ENCODE measurements at regions of chr9 and their contacts with region 1.

Region 1: GRCh38 chr9:95875305-95876137 is at the start of gene ERCC6L2:
- DNase-seq: peak; percentile 90 to 92 (median 90)
- H3K4me3 ChIP-seq: no peak within 1 kb of the TSS
- H3K4me3 Mint-ChIP-seq: no peak within 1 kb of the TSS
- H3K27ac ChIP-seq: no peak within 1 kb of the TSS
- H3K27ac Mint-ChIP-seq: no peak within 1 kb of the TSS
- H3K4me1 ChIP-seq: peaks cover 28% of the 10 kb centered on the region
- H3K4me1 Mint-ChIP-seq: peaks cover 25 to 31% (median 28%) of the 10 kb centered on the region in 4 donors
- H3K27me3 ChIP-seq: no peaks in the 10 kb centered on the region
- H3K27me3 Mint-ChIP-seq: no peaks in the 10 kb centered on the region
- total RNA-seq, gene ERCC6L2: 54.3 to 57.2 TPM

Region 2: DNA sequence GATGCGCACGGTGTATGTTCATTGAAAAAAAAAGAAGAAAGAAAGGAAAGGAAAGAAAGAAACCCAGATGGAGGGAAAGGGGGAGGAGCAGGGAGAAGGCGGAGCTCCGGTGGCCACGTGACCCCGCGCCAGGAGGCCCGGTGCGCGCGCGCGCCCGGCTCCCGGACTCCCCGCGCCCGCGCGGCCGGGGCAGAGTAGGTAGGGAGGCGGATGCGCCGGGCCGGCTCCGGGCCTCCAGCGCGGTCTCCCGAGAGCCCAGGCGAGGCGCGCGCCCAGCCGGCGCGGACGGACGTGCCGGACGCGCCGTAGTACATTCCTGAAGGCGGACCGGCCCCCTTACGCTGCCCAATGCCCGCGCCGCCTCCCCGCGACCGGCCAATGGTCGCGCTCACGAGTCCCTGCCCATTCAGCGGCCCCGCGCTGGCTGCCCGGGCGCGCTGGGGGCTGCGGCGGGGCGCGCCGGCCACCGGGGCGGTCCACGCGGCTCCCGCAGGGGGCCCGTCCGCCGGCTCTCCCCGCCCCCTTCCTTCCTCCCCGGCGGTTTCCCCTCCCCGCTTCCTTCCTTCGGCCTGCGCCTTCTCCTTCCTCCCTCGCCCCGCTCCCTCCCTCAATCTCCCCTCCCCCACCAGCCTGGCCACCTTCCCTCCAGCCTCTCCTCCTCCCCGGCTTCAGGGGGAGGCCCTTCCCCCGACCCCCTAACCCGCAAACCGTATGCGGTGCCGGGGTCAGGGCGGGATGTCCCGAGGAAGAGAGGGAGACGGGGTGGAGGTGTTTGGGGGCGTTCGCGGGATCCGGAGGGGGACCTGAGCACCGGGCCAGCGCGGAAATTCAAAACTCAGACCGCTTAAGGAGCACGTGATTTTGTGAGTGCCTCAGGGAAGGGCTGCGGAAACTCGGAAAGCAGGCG is 364.6 kb before region 1 on chr9:
- CTCF ChIA-PET with region 1: no interaction called
- POLR2A ChIA-PET with region 1: interaction called, 5 read pairs
- intact Hi-C with region 1: loop called (anchors 1 kb)
- DNase-seq: peak; percentile 80 to 83 (median 81)
- H3K4me3 ChIP-seq: peak overlapping the region; percentile 42 to 46
- H3K4me3 Mint-ChIP-seq: peak overlapping the region; percentile 89 to 99 (median 94)
- H3K27ac ChIP-seq: peak overlapping the region; percentile 4
- H3K27ac Mint-ChIP-seq: peak overlapping the region; percentile 87 to 96 (median 94)
- H3K4me1 ChIP-seq: peaks cover 40% of the 10 kb centered on the region
- H3K4me1 Mint-ChIP-seq: peaks cover 21 to 73% (median 31%) of the 10 kb centered on the region in 4 donors
- H3K27me3 ChIP-seq: peaks cover 4% of the 10 kb centered on the region
- H3K27me3 Mint-ChIP-seq: peaks cover 7 to 13% of the 10 kb centered on the region in 2 donors

Region 3: GRCh38 chr9:95887926-95888497 is 12.5 kb after region 1 on chr9:
- CTCF ChIA-PET with region 1: interaction called, 46 read pairs
- POLR2A ChIA-PET with region 1: interaction called, 86 read pairs
- intact Hi-C with region 1: loop called (anchors 1 kb)
- DNase-seq: peak in 4 of 5 donors; percentile 23 to 39 (median 30)
- H3K4me3 ChIP-seq: no peak overlapping the region
- H3K4me3 Mint-ChIP-seq: peak overlapping the region; percentile 65 to 87 (median 77)
- H3K27ac ChIP-seq: peak overlapping the region; percentile 37
- H3K27ac Mint-ChIP-seq: peak overlapping the region; percentile 79 to 90 (median 85)
- H3K4me1 ChIP-seq: peaks cover 60% of the 10 kb centered on the region
- H3K4me1 Mint-ChIP-seq: peaks cover 43 to 64% (median 50%) of the 10 kb centered on the region in 4 donors
- H3K27me3 ChIP-seq: no peaks in the 10 kb centered on the region
- H3K27me3 Mint-ChIP-seq: no peaks in the 10 kb centered on the region

Region 4: DNA sequence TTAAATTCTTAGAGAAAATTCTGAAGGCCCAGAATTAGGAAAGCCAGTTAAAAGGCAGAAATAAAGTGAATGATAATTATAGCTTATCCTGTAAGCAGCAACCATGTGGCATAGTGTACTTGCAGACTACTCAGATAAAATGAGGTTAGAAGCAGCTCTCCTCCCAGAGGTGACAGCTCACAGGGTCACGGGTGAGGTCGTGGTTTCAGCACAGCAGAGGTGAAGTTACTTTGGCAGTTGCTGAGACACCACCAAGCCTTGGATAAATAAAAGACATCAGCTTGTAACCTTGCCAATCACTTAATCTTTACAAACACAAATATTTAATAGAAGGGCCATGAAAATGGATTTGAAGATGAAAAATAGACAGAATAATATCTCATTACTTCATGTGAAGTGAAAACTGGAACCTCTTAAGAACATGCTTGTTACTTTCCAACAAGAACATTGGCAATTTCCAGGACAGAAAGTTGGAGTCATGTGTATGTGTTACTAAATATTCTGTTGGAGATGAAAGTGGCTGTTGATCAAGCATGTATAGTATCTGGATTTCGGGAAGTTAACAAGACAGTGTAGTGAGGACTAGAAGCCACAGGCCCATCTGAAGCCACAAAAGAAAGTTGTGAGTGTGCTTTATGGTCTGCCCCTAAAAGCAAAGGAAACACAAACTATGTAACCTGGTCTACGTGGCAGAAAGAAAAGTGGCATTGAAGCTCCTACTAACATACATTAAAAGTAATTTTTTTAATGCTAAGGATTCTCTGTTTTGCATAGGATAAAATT is 134.4 kb after region 1 on chr9:
- CTCF ChIA-PET with region 1: interaction called, 5 read pairs
- POLR2A ChIA-PET with region 1: interaction called, 10 read pairs
- intact Hi-C with region 1: loop called (anchors 2 kb)
- DNase-seq: peak; percentile 48 to 82 (median 67)
- H3K4me3 ChIP-seq: no peak overlapping the region
- H3K4me3 Mint-ChIP-seq: peak overlapping the region in 6 of 8 donors; percentile 42 to 66 (median 54)
- H3K27ac ChIP-seq: peak overlapping the region; percentile 29
- H3K27ac Mint-ChIP-seq: peak overlapping the region in 6 of 7 donors; percentile 87 to 95 (median 94)
- H3K4me1 ChIP-seq: peaks cover 58% of the 10 kb centered on the region
- H3K4me1 Mint-ChIP-seq: peaks cover 17 to 56% (median 30%) of the 10 kb centered on the region in 4 donors
- H3K27me3 ChIP-seq: no peaks in the 10 kb centered on the region
- H3K27me3 Mint-ChIP-seq: no peaks in the 10 kb centered on the region